ENCODE measurements at regions of chr3 and their contacts with region 1.

Region 1: GRCh38 chr3:187319699-187320302 is 28.3 kb upstream of the MASP1 start:
- DNase-seq: peak; percentile 17
- ATAC-seq: peak; percentile 97
- H3K4me3 ChIP-seq: no peak overlapping the region
- H3K27ac ChIP-seq: no peak overlapping the region
- H3K4me1 ChIP-seq: no peaks in the 10 kb centered on the region
- H3K27me3 ChIP-seq: peaks cover 0 to 1% of the 10 kb centered on the region in 2 experiments; a peak in 1 of 4 replicates
- CTCF ChIP-seq: peak; percentile 80 to 97 (median 94)
- EP300 ChIP-seq: no peak
- POLR2A ChIP-seq: no peak
- RAD21 ChIP-seq: peak; percentile 82

Region 2: DNA sequence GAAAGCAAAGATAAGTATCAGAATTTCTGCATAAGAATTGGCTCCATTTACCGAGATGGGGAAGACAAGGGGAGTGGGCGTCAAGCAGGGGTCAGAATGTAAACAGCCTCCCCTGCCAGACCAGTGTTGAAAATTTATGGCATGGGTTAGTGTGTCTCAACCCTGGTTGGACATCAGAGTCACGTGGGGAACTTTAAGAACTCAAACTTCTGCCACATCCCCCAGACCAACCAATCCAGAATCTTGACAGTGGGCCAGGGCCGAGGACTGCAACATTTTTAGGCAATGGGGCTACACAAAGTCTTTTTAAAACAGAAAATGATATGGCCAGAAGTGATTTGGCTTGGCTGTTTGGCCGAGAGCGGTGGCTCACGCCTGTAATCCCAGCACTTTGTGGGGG is 13.9 kb before region 1 on chr3:
- CTCF ChIA-PET with region 1: interaction called, 38 read pairs
- POLR2A ChIA-PET with region 1: no interaction called
- RAD21 ChIA-PET with region 1: interaction called, 4 read pairs
- SMC1A ChIA-PET with region 1: interaction called, 5 read pairs
- in situ Hi-C with region 1: no loop called
- intact Hi-C with region 1: no loop called
- DNase-seq: no peak
- ATAC-seq: no peak
- H3K4me3 ChIP-seq: no peak overlapping the region
- H3K27ac ChIP-seq: no peak overlapping the region
- H3K4me1 ChIP-seq: no peaks in the 10 kb centered on the region
- H3K27me3 ChIP-seq: no peaks in the 10 kb centered on the region
- CTCF ChIP-seq: no peak
- EP300 ChIP-seq: no peak
- POLR2A ChIP-seq: no peak
- RAD21 ChIP-seq: no peak

Region 3: DNA sequence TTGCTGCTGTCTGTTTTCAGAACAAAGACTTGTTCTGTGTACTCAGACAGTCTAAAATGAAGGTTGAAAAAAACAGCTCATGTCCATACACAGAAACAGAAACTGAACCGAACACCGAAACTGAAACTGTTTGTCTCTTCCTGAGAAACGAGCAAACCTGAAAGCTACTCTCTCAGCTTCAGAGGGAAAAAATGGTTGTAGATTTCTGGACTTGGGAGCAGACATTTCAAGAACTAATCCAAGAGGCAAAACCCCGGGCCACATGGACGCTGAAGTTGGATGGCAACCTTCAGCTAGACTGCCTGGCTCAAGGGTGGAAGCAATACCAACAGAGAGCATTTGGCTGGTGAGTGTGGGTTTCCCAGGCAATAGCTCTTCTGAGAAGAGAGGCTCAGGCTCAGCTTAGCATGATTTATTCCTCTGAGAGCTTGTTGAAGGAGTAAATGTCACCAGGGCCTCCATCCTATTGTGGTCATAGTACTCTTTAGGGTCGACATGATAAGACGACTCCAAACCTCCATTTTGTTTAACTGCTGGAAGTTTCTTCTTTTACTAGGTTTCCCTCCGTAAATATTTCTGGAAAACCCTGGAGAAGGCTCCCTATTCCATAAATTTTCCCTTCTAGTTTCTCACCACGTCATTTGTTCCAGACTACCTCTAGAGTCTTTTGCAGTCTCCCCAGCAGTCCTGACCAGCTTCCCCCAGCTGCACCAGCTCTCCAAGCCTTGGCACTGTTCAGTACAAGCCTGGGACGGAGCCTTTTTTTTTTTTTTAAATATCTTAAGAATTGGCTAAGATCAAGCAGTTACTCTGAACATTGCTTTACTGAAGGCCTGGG is 48.7 kb after region 1 on chr3 and contains the start of gene RTP4:
- CTCF ChIA-PET with region 1: interaction called, 20 read pairs
- POLR2A ChIA-PET with region 1: no interaction called
- RAD21 ChIA-PET with region 1: interaction called, 6 read pairs
- SMC1A ChIA-PET with region 1: interaction called, 6 read pairs
- in situ Hi-C with region 1: no loop called
- intact Hi-C with region 1: no loop called
- DNase-seq: peak; percentile 82
- ATAC-seq: peak; percentile 92
- H3K4me3 ChIP-seq: peak within 1 kb of the TSS; percentile 84
- H3K27ac ChIP-seq: peak within 1 kb of the TSS; percentile 98
- H3K4me1 ChIP-seq: peaks cover 6% of the 10 kb centered on the region
- H3K27me3 ChIP-seq: no peaks in the 10 kb centered on the region
- CTCF ChIP-seq: no peak
- EP300 ChIP-seq: no peak
- POLR2A ChIP-seq: peak; percentile 48; the same call in 1 of the 2 replicates
- RAD21 ChIP-seq: no peak
- polyA plus RNA-seq, gene RTP4: 5.5 to 6.5 TPM

Region 4: GRCh38 chr3:187616307-187616972 is 296.6 kb after region 1 on chr3:
- CTCF ChIA-PET with region 1: interaction called, 47 read pairs
- POLR2A ChIA-PET with region 1: no interaction called
- RAD21 ChIA-PET with region 1: interaction called, 18 read pairs
- SMC1A ChIA-PET with region 1: interaction called, 32 read pairs
- in situ Hi-C with region 1: no loop called
- intact Hi-C with region 1: loop called (anchors 1 kb)
- DNase-seq: no peak
- ATAC-seq: peak; percentile 89
- H3K4me3 ChIP-seq: no peak overlapping the region
- H3K27ac ChIP-seq: no peak overlapping the region
- H3K4me1 ChIP-seq: no peaks in the 10 kb centered on the region
- H3K27me3 ChIP-seq: no peaks in the 10 kb centered on the region; a peak in 1 of 4 replicates
- CTCF ChIP-seq: peak; percentile 66 to 69 (median 66)
- EP300 ChIP-seq: no peak
- POLR2A ChIP-seq: no peak
- RAD21 ChIP-seq: peak; percentile 70

Region 5: GRCh38 chr3:187679638-187680396 is 360.0 kb after region 1 on chr3:
- CTCF ChIA-PET with region 1: interaction called, 519 read pairs
- POLR2A ChIA-PET with region 1: interaction called, 3 read pairs
- RAD21 ChIA-PET with region 1: interaction called, 219 read pairs
- SMC1A ChIA-PET with region 1: interaction called, 231 read pairs
- in situ Hi-C with region 1: loop called (anchors 5 kb)
- intact Hi-C with region 1: loop called (anchors 1 kb)
- DNase-seq: no peak
- ATAC-seq: peak; percentile 97
- H3K4me3 ChIP-seq: no peak overlapping the region
- H3K27ac ChIP-seq: no peak overlapping the region
- H3K4me1 ChIP-seq: no peaks in the 10 kb centered on the region
- H3K27me3 ChIP-seq: no peaks in the 10 kb centered on the region
- CTCF ChIP-seq: peak; percentile 84 to 94 (median 89)
- EP300 ChIP-seq: no peak
- POLR2A ChIP-seq: no peak
- RAD21 ChIP-seq: peak; percentile 91

Region 6: DNA sequence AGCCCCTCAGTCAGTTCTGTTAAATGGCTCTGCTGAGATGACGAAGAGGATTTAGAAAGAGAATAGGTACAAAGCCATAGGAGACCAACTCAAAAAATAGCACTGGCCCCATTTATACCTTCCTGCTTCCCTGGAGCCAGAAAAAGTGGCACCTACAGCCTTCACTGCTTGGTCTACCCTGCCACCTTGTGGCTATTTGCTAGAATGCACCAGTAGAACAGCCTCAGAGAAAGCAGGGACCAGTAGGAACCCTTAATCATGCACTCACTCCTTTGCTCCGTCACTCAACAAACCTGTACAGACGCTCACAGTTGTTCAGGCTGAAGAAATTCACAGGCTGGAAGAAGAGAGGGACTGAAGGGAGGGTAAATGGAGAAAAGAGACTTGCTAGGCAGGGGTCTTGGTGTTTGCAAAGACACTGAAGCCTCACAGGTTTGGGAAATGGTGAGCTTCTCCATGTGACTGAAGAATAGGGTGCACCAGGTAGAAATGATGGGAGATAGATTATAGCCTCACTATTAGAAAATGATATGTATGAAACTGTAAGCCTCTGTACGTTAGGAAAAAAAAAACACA is 394.7 kb after region 1 on chr3:
- CTCF ChIA-PET with region 1: interaction called, 54 read pairs
- POLR2A ChIA-PET with region 1: no interaction called
- RAD21 ChIA-PET with region 1: interaction called, 31 read pairs
- SMC1A ChIA-PET with region 1: interaction called, 22 read pairs
- in situ Hi-C with region 1: loop called (anchors 5 kb)
- intact Hi-C with region 1: loop called (anchors 1 kb)
- DNase-seq: no peak
- ATAC-seq: peak; percentile 96
- H3K4me3 ChIP-seq: no peak overlapping the region
- H3K27ac ChIP-seq: no peak overlapping the region
- H3K4me1 ChIP-seq: no peaks in the 10 kb centered on the region
- H3K27me3 ChIP-seq: no peaks in the 10 kb centered on the region
- CTCF ChIP-seq: peak; percentile 87 to 92 (median 90); a peak in 5 of 6 replicates
- EP300 ChIP-seq: no peak
- POLR2A ChIP-seq: no peak
- RAD21 ChIP-seq: peak; percentile 96

Region 7: GRCh38 chr3:188205992-188206416 is 886.2 kb after region 1 on chr3:
- CTCF ChIA-PET with region 1: no interaction called
- POLR2A ChIA-PET with region 1: no interaction called
- RAD21 ChIA-PET with region 1: no interaction called
- SMC1A ChIA-PET with region 1: no interaction called
- in situ Hi-C with region 1: no loop called
- intact Hi-C with region 1: no loop called
- DNase-seq: no peak
- ATAC-seq: peak; percentile 40; the same call in 1 of the 3 replicates
- H3K4me3 ChIP-seq: no peak overlapping the region
- H3K27ac ChIP-seq: no peak overlapping the region
- H3K4me1 ChIP-seq: no peaks in the 10 kb centered on the region
- H3K27me3 ChIP-seq: 0 out of 4 replicates have a peak, but pooled peaks cover 0 to 3% of the 10 kb centered on the region in 2 experiments
- CTCF ChIP-seq: peak in 2 of 3 experiments; percentile 25 to 26; a peak in 2 of 6 replicates
- EP300 ChIP-seq: no peak
- POLR2A ChIP-seq: no peak
- RAD21 ChIP-seq: 0 out of 2 replicates have a peak, but pooled peaks have one; percentile 13

Region 8: GRCh38 chr3:189249987-189250386 is 1930.2 kb after region 1 on chr3:
- CTCF ChIA-PET with region 1: no interaction called
- POLR2A ChIA-PET with region 1: no interaction called
- RAD21 ChIA-PET with region 1: no interaction called
- SMC1A ChIA-PET with region 1: no interaction called
- in situ Hi-C with region 1: no loop called
- intact Hi-C with region 1: no loop called
- DNase-seq: no peak
- ATAC-seq: no peak
- H3K4me3 ChIP-seq: no peak overlapping the region
- H3K27ac ChIP-seq: no peak overlapping the region
- H3K4me1 ChIP-seq: no peaks in the 10 kb centered on the region
- H3K27me3 ChIP-seq: no peaks in the 10 kb centered on the region
- CTCF ChIP-seq: no peak
- EP300 ChIP-seq: no peak
- POLR2A ChIP-seq: no peak
- RAD21 ChIP-seq: no peak

Measured in GM12878 (cell line).